Heart right ventricle (tissue), 16 donors: ENCODE measurements at regions of chr3 and their contacts with region 1.

Region 1: DNA sequence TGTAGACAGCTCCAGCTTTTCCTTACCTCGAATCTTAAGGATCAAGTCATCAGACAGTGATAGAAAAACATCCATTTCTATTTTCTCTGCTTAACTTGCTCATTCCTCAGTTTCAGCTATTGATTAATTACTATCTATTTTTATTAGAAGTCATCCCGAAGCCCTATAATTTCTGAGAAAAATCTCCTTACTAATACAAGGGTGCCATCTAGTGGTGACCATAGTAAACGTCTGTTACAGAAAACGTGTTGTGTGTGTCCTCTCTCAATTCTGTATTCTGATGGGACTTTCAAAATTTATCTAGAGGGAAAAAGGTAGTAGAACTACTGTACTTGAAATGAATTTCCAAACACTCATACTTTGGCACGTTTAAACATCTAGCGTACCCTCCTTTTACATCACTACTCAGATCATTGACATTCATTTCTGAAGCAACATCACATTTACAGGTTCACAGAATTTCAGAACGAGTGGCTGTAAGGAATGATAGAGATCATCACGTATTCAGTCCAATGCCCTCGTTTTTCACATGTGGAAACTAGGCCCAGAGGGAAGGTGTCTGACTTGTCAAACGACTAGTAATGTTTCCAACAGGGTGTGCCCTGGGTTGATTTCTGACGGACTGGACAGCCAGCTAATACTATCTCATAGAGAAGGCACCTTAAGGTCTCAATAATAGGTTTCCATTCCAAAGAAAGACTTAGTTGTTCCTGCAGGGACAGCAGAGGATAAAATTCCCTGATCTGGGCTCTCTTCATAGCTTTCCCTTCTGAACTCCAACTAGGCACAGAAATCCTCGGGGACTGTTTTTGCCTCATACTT is 25.6 kb downstream of the HACD2 start:
- DNase-seq: no peak
- ATAC-seq: peak in 2 of 8 donors; percentile 48 to 56
- H3K4me3 ChIP-seq: no peak overlapping the region
- H3K27ac ChIP-seq: no peak overlapping the region
- H3K4me1 ChIP-seq: peaks cover 0 to 3% (median 0%) of the 10 kb centered on the region in 9 donors
- H3K27me3 ChIP-seq: no peaks in the 10 kb centered on the region
- CTCF ChIP-seq: peak; percentile 75 to 93 (median 85)

Region 2: DNA sequence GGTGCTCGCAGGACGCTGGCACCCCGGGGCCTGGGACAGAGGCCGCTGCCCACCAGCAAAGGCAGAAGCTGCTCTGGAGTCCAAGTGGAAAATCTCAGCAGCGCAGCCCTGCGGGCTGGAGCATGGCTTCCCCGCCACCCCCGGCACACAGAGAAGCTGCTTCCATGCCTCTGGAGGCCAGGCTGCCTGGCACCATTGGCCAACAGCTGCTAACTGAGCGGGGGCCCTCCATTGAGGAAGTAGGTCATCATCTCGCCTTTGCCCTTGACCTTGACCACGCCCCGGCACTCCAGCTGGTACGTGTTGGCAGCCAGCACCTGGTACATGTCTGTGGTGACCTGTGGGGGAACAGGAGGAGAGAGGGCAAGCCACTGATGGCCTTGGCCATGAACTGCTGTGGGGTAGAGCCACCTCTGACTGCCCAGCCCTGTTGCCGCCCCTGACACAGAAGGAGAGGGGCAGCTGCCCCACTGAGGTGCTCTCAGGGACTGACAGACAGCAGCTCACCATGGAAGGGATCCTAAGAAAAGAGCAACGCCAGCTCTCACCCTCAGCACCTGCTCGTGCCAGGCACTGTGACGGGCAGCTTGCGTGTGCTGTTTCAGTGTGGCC is 274.7 kb before region 1 on chr3:
- intact Hi-C with region 1: no loop called
- DNase-seq: peak in 1 of 2 donors; percentile 37
- ATAC-seq: peak in 7 of 8 donors; percentile 15 to 53 (median 38)
- H3K4me3 ChIP-seq: no peak overlapping the region
- H3K27ac ChIP-seq: peak overlapping the region in 4 of 10 donors; percentile 14 to 47 (median 36)
- H3K4me1 ChIP-seq: peaks cover 0 to 21% (median 5%) of the 10 kb centered on the region in 9 donors
- H3K27me3 ChIP-seq: no peaks in the 10 kb centered on the region
- CTCF ChIP-seq: no peak

Region 3: GRCh38 chr3:123476967-123477750 is 82.1 kb before region 1 on chr3:
- intact Hi-C with region 1: no loop called
- DNase-seq: no peak
- ATAC-seq: peak in 2 of 8 donors; percentile 24 to 43
- H3K4me3 ChIP-seq: no peak overlapping the region
- H3K27ac ChIP-seq: no peak overlapping the region
- H3K4me1 ChIP-seq: peaks cover 0 to 4% (median 0%) of the 10 kb centered on the region in 9 donors
- H3K27me3 ChIP-seq: peaks cover 0 to 6% (median 0%) of the 10 kb centered on the region in 7 donors
- CTCF ChIP-seq: no peak

Region 4: DNA sequence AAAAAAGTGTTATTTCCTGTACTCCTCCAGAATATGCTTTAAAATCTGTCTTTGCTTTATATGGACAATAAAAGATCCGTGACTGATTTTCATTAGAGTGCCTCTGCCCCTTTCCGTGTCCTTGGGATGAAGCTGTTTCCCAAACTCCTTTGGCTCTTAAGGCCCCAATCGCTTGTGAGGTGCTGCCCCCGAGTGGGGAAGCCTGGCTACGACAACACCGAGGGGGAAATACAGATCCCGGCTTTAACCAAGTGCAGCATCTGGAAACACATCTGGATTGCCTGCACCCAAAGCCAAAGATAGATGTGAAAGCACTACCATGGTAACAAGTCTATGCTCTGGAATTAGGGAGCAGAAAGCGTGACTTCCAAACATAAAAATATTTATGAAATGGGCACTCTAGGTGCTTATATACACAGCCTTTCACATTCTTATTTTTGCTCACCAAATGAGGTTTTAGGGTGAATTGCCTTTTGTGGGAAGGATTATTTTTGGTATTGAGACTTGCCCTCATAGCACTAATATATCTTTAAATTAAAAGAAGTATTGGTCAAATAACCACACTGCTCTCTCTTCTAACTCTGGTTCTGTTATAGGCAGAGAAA is 69.7 kb before region 1 on chr3:
- intact Hi-C with region 1: loop called in 1 of 10 experiments (anchors 10 kb)
- DNase-seq: peak; percentile 76 to 80
- ATAC-seq: peak; percentile 75 to 90 (median 85)
- H3K4me3 ChIP-seq: peak overlapping the region in 2 of 10 donors; percentile 0 to 8
- H3K27ac ChIP-seq: peak overlapping the region in 7 of 10 donors; percentile 31 to 74 (median 68)
- H3K4me1 ChIP-seq: peaks cover 0 to 52% (median 7%) of the 10 kb centered on the region in 9 donors
- H3K27me3 ChIP-seq: no peaks in the 10 kb centered on the region
- CTCF ChIP-seq: peak; percentile 61 to 91 (median 88)